Psoas muscle (tissue), 8 donors: ENCODE measurements at regions of chr11 and their contacts with region 1.

Region 1: DNA sequence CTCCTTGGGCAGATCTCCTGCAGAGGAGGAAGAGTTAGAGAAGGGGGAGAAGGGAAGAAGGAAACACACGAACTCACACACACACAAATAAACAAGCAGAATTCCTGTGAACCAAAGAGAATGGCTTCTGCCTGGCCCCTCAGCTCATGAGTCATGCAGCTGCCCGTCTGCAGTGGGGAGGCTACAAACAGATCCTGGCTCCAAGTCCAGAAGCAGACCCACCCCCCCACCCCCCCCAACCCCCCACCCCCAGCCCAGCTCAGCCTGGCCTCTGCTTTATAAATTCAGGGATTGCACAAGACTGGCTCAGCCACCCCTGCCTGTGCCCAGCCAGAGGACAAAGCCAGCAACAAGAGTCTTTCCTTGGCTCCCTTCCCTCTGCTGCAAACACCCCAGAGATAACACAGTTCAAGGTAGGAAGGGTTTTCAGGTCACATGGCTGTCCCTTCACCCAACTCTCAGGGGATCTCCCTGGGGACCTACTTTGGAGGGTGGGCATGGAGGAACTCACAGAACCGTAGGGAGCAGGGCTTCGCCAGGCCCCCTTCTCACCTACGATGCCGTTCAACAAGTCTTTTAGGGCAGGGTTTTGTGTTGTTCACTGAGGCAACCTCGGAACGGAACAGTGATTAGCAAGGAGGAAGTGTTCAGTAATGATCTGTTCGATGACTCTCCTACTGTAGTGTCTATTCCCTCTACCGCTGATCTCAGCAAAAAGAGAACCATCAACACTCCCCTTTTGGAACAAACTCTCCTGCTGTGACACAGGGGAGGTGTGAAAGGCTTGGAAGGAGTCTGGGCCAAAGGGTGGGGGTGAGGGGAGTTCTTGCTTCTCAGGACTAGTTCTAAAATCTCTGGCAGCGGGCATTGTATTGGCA is 35.5 kb downstream of the RPL27A start:
- DNase-seq: peak; percentile 56 to 73
- ATAC-seq: peak; percentile 58 to 76 (median 64)
- H3K4me3 ChIP-seq: no peak overlapping the region
- H3K27ac ChIP-seq: peak overlapping the region; percentile 77
- H3K4me1 ChIP-seq: peaks cover 63% of the 10 kb centered on the region
- H3K27me3 ChIP-seq: no peaks in the 10 kb centered on the region
- CTCF ChIP-seq: no peak

Region 2: DNA sequence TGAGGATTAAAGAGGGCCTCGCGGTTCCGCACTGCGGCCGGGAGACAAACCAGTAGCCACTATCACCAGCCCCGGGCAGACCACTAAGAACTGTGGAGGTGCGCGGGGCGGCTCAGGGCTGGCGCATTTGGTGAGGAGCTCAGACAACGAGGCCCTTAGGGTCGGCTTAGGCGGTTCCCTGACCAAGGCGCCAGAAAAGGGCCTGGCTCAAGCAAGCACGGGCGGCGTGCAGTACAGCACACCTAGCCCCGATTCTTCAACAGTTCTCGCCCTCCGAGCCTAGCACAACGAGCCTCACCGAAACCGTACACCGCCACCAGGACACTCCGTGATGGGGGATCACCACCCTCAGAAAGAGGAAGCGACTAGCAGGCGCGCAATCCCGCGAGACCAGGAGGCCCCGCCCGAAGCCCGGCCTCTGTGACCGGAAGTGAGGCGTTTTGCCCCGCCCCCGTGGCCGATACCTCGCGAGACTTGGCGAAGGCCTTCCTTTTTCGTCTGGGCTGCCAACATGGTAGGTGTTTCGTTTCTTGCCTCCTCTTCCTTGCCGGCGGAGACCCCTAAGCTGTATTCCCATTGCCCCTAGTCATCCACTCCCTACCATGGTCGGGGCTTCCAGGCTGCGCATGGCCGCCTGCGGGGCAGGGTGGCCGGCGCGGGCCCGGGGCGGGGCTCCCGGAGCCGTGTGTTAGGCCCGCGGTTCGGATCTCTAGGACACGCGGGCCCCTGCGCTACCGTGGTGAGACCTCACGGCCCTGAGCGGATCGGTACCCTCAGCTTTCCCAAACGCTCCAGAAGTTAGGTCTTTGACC is 35.6 kb before region 1 on chr11 and contains the starts of genes RPL27A and TRIM66:
- intact Hi-C with region 1: no loop called
- DNase-seq: peak; percentile 99 to 100
- ATAC-seq: peak; percentile 96 to 99 (median 98)
- H3K4me3 ChIP-seq: peak within 1 kb of the TSS; percentile 96
- H3K27ac ChIP-seq: peak within 1 kb of the TSS; percentile 93
- H3K4me1 ChIP-seq: peaks cover 23% of the 10 kb centered on the region
- H3K27me3 ChIP-seq: no peaks in the 10 kb centered on the region
- CTCF ChIP-seq: no peak
- total RNA-seq, gene RPL27A: 308 to 673 (median 565) TPM
- total RNA-seq, gene TRIM66: 2.0 to 3.9 (median 3.5) TPM

Region 3: GRCh38 chr11:8759634-8760033 is 41.5 kb after region 1 on chr11:
- intact Hi-C with region 1: loop called in 1 of 2 experiments (anchors 5 kb)
- DNase-seq: peak; percentile 49 to 70
- ATAC-seq: peak; percentile 48 to 83 (median 62)
- H3K4me3 ChIP-seq: no peak overlapping the region
- H3K27ac ChIP-seq: peak overlapping the region; percentile 74
- H3K4me1 ChIP-seq: peaks cover 54% of the 10 kb centered on the region
- H3K27me3 ChIP-seq: no peaks in the 10 kb centered on the region
- CTCF ChIP-seq: no peak

Region 4: DNA sequence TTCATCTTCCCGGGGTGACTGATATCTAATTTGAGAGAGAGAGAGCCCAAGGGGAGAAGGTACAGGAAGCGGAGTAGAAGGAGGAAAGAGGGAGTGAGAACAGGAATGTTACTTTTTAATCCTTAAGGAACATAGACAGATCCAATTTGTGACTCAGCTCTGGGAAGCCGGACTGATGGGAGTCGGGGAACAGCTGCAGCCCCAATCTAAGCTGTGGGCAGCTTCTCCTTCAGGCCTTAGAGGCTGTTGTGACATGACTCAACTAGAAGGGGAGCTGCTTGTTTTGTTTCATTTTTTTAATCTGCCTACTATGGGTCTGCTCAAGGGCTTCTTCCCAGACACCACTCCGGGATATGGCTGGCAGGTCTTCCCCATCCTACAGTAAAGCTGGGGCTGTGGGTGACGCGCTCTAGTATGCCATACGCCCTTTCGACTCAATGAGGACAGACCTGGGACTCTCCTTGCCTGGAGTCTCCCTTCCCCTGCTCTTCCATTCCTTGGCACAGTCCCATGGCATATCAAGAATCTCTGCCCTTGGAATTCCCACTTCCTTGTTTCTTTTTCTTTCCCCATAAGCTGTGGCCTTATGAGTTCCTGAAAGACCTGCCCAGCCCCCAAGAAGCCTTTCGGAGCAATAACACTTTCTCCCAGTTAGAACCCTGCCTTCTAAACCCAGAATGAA is 89.6 kb after region 1 on chr11:
- intact Hi-C with region 1: loop called in 1 of 2 experiments (anchors 10 kb)
- DNase-seq: peak; percentile 63 to 73
- ATAC-seq: peak; percentile 37 to 60 (median 53)
- H3K4me3 ChIP-seq: peak overlapping the region; percentile 73
- H3K27ac ChIP-seq: peak overlapping the region; percentile 75
- H3K4me1 ChIP-seq: peaks cover 23% of the 10 kb centered on the region
- H3K27me3 ChIP-seq: no peaks in the 10 kb centered on the region
- CTCF ChIP-seq: no peak